Naive thymus-derived CD4-positive, alpha-beta T cell (primary cell): ENCODE measurements at regions of chr13 and their contacts with region 1.

Region 1: DNA sequence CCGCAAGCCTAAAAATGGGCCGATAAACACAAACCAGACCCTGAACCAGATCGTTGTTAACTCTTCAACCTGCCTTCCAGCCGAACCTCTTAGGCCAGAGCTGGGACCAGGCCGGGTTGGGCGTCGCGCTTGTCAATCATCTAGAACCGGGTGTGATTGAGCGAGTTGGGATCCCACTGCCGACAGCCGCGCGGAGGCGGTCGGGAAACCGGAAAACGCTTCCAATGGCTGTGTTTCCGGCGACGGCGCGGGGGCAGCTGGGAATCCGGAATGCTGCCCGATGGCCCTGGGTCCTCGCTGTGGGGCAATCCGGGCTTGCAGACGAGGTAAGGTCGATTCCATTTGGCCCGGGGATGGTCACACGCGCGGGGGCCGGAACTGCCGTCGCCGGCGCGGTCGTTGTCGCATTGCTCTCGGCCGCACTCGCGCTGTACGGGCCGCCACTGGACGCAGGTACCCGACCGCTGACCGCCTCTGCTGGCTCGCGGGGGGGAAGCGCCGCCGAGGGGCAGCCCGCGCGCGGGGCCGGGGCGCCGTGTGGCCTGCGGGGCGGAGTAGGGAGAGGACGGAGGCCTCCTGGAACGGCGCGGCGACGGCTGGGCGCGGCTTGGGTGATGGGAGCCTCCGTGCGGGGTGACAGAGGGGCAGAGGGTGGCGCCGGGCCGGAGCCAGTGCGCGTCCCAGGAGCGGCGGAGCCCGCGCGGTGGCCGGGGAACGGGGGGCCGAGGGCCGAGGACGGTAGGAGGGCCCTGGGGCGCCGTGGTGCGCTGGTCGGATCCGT is at the start of gene NAXD:
- DNase-seq: peak; percentile 44 to 80 (median 76)
- ATAC-seq: peak; percentile 86
- H3K4me3 ChIP-seq: peak within 1 kb of the TSS; percentile 71
- H3K4me3 Mint-ChIP-seq: peak within 1 kb of the TSS; percentile 86 to 97 (median 95)
- H3K27ac ChIP-seq: peak within 1 kb of the TSS; percentile 75
- H3K27ac Mint-ChIP-seq: peak within 1 kb of the TSS; percentile 85 to 96 (median 93)
- H3K4me1 ChIP-seq: peaks cover 9 to 13% of the 10 kb centered on the region in 2 donors
- H3K4me1 Mint-ChIP-seq: peaks cover 19 to 47% (median 38%) of the 10 kb centered on the region in 7 donors
- H3K27me3 ChIP-seq: no peaks in the 10 kb centered on the region
- H3K27me3 Mint-ChIP-seq: peaks cover 0 to 5% (median 0%) of the 10 kb centered on the region in 5 donors
- total RNA-seq, gene NAXD: 17.2 to 34.1 (median 25.9) TPM

Region 2: GRCh38 chr13:110455941-110456340 is 159.6 kb before region 1 on chr13:
- CTCF ChIA-PET with region 1: no interaction called
- POLR2A ChIA-PET with region 1: interaction called, 4 read pairs
- intact Hi-C with region 1: loop called in 1 of 2 experiments (anchors 10 kb)
- DNase-seq: peak; percentile 21 to 58 (median 44)
- ATAC-seq: peak; percentile 87
- H3K4me3 ChIP-seq: no peak overlapping the region
- H3K4me3 Mint-ChIP-seq: peak overlapping the region in 9 of 10 donors; percentile 3 to 74 (median 45)
- H3K27ac ChIP-seq: no peak overlapping the region
- H3K27ac Mint-ChIP-seq: no peak overlapping the region
- H3K4me1 ChIP-seq: no peaks in the 10 kb centered on the region
- H3K4me1 Mint-ChIP-seq: peaks cover 2 to 6% (median 5%) of the 10 kb centered on the region in 7 donors
- H3K27me3 ChIP-seq: no peaks in the 10 kb centered on the region
- H3K27me3 Mint-ChIP-seq: peaks cover 14 to 29% (median 19%) of the 10 kb centered on the region in 5 donors

Region 3: GRCh38 chr13:110561344-110562035 is 54.0 kb before region 1 on chr13 and contains the start of gene RAB20:
- CTCF ChIA-PET with region 1: no interaction called
- POLR2A ChIA-PET with region 1: interaction called, 4 read pairs
- intact Hi-C with region 1: loop called (anchors 1 to 2 kb)
- DNase-seq: peak; percentile 5 to 66 (median 37)
- ATAC-seq: peak; percentile 82
- H3K4me3 ChIP-seq: peak within 1 kb of the TSS; percentile 79
- H3K4me3 Mint-ChIP-seq: peak within 1 kb of the TSS; percentile 85 to 99 (median 98)
- H3K27ac ChIP-seq: peak within 1 kb of the TSS; percentile 66
- H3K27ac Mint-ChIP-seq: peak within 1 kb of the TSS; percentile 73 to 96 (median 88)
- H3K4me1 ChIP-seq: peaks cover 4 to 9% of the 10 kb centered on the region in 2 donors
- H3K4me1 Mint-ChIP-seq: peaks cover 22 to 53% (median 41%) of the 10 kb centered on the region in 7 donors
- H3K27me3 ChIP-seq: no peaks in the 10 kb centered on the region
- H3K27me3 Mint-ChIP-seq: peaks cover 0 to 32% (median 4%) of the 10 kb centered on the region in 5 donors
- total RNA-seq, gene RAB20: 2.0 to 13.6 (median 4.0) TPM

Region 4: GRCh38 chr13:110629735-110630134 is 14.2 kb after region 1 on chr13:
- CTCF ChIA-PET with region 1: no interaction called
- POLR2A ChIA-PET with region 1: no interaction called
- intact Hi-C with region 1: loop called (anchors 1 kb)
- DNase-seq: peak in 5 of 9 donors; percentile 20 to 50 (median 31)
- ATAC-seq: peak; percentile 65
- H3K4me3 ChIP-seq: no peak overlapping the region
- H3K4me3 Mint-ChIP-seq: peak overlapping the region in 1 of 10 donors; percentile 58
- H3K27ac ChIP-seq: no peak overlapping the region
- H3K27ac Mint-ChIP-seq: peak overlapping the region; percentile 47 to 79 (median 70)
- H3K4me1 ChIP-seq: no peaks in the 10 kb centered on the region
- H3K4me1 Mint-ChIP-seq: peaks cover 29 to 52% (median 47%) of the 10 kb centered on the region in 7 donors
- H3K27me3 ChIP-seq: no peaks in the 10 kb centered on the region
- H3K27me3 Mint-ChIP-seq: no peaks in the 10 kb centered on the region

Region 5: DNA sequence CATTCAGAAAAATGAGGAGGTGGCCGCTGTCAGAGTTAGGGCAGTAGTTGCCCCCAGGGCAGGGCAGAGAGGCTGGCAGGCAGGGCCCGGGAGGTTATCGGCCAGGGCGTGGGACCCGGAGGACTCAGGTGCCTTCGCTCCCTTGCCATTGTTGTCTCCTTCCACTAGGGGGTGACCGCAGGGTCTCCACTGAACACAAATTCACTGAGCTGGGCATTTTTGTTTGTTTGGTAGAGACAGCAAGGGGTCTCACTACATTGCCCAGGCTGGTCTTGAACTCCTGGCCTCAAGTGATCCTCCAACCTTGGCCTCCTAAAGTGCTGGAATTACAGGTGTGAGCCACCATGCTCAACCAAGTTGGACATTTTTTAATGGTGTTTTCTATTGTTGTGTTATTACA is 65.3 kb after region 1 on chr13:
- CTCF ChIA-PET with region 1: no interaction called
- POLR2A ChIA-PET with region 1: no interaction called
- intact Hi-C with region 1: loop called in 1 of 2 experiments (anchors 2 kb)
- DNase-seq: peak in 3 of 9 donors; percentile 8 to 22 (median 21)
- ATAC-seq: no peak
- H3K4me3 ChIP-seq: no peak overlapping the region
- H3K4me3 Mint-ChIP-seq: no peak overlapping the region
- H3K27ac ChIP-seq: no peak overlapping the region
- H3K27ac Mint-ChIP-seq: no peak overlapping the region
- H3K4me1 ChIP-seq: no peaks in the 10 kb centered on the region
- H3K4me1 Mint-ChIP-seq: peaks cover 4 to 22% (median 12%) of the 10 kb centered on the region in 7 donors
- H3K27me3 ChIP-seq: no peaks in the 10 kb centered on the region
- H3K27me3 Mint-ChIP-seq: no peaks in the 10 kb centered on the region

Region 6: GRCh38 chr13:111184458-111185401 is 569.2 kb after region 1 on chr13:
- CTCF ChIA-PET with region 1: no interaction called
- POLR2A ChIA-PET with region 1: no interaction called
- intact Hi-C with region 1: loop called in 1 of 2 experiments (anchors 10 kb)
- DNase-seq: peak in 7 of 9 donors; percentile 52 to 68 (median 55)
- ATAC-seq: peak; percentile 67
- H3K4me3 ChIP-seq: peak overlapping the region; percentile 22
- H3K4me3 Mint-ChIP-seq: peak overlapping the region; percentile 65 to 88 (median 82)
- H3K27ac ChIP-seq: peak overlapping the region; percentile 62
- H3K27ac Mint-ChIP-seq: peak overlapping the region; percentile 84 to 98 (median 93)
- H3K4me1 ChIP-seq: peaks cover 50 to 92% of the 10 kb centered on the region in 2 donors
- H3K4me1 Mint-ChIP-seq: peaks cover 84 to 100% (median 95%) of the 10 kb centered on the region in 7 donors
- H3K27me3 ChIP-seq: no peaks in the 10 kb centered on the region
- H3K27me3 Mint-ChIP-seq: no peaks in the 10 kb centered on the region